Activated CD4-positive, alpha-beta memory T cell treated with anti-CD3 and anti-CD28 coated beads, Interleukin-2, amount 10 ng/mL, durations not matched to agents 7 days and 5 days (primary cell): ENCODE measurements at regions of chr2 and their contacts with region 1.

Region 1: GRCh38 chr2:215982080-215982875 is 31.1 kb downstream of the MREG start:
- DNase-seq: peak; percentile 57
- H3K4me3 Mint-ChIP-seq: no peak overlapping the region
- H3K27ac Mint-ChIP-seq: peak overlapping the region; percentile 52
- H3K4me1 Mint-ChIP-seq: peaks cover 57% of the 10 kb centered on the region
- H3K27me3 Mint-ChIP-seq: no peaks in the 10 kb centered on the region

Region 2: GRCh38 chr2:215969131-215969841 is 13.0 kb before region 1 on chr2:
- CTCF ChIA-PET with region 1: interaction called, 11 read pairs
- POLR2A ChIA-PET with region 1: interaction called, 12 read pairs
- DNase-seq: no peak
- H3K4me3 Mint-ChIP-seq: no peak overlapping the region
- H3K27ac Mint-ChIP-seq: no peak overlapping the region
- H3K4me1 Mint-ChIP-seq: peaks cover 59% of the 10 kb centered on the region
- H3K27me3 Mint-ChIP-seq: no peaks in the 10 kb centered on the region

Region 3: GRCh38 chr2:216015722-216016464 is 33.6 kb after region 1 on chr2:
- CTCF ChIA-PET with region 1: interaction called, 6 read pairs
- POLR2A ChIA-PET with region 1: interaction called, 12 read pairs
- DNase-seq: peak; percentile 74
- H3K4me3 Mint-ChIP-seq: peak overlapping the region; percentile 25
- H3K27ac Mint-ChIP-seq: peak overlapping the region; percentile 91
- H3K4me1 Mint-ChIP-seq: peaks cover 62% of the 10 kb centered on the region
- H3K27me3 Mint-ChIP-seq: no peaks in the 10 kb centered on the region

Region 4: DNA sequence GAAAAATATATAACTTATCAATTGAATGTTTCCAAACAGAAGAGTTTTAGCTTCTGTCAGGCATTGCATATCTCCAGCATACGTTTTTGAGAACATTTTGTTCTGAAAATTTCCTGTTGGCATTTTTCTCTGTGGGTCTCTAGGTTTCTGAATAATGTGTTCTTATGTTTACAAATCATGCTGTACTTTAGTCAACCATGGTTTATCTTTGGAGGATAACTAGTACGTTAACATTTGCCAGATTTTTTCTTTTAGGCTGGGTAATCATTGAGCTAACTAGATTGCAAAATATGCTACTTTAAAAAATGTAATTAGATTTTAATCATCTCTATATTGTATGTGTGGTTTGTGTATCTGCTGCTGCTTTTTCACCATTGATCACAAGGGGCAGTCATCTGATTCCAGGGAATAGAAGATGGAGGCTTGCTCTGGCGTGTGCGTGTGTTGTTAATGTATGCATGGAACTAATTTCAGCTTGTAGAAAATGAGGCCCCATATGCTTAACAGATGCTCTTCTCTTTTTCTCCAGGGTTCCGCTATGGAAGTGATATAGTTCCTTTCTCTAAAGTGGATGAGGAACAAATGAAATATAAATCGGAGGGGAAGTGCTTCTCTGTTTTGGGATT is 148.2 kb after region 1 on chr2:
- CTCF ChIA-PET with region 1: no interaction called
- POLR2A ChIA-PET with region 1: no interaction called
- DNase-seq: no peak
- H3K4me3 Mint-ChIP-seq: no peak overlapping the region
- H3K27ac Mint-ChIP-seq: no peak overlapping the region
- H3K4me1 Mint-ChIP-seq: peaks cover 52% of the 10 kb centered on the region
- H3K27me3 Mint-ChIP-seq: no peaks in the 10 kb centered on the region